ENCODE measurements at regions of chr12 and their contacts with region 1.

Region 1: GRCh38 chr12:119115296-119115905 is 63.3 kb upstream of the HSPB8 start:
- DNase-seq: no peak
- ATAC-seq: peak; percentile 44

Region 2: GRCh38 chr12:119008691-119009221 is 106.6 kb before region 1 on chr12:
- intact Hi-C with region 1: no loop called
- DNase-seq: no peak
- ATAC-seq: no peak

Region 3: DNA sequence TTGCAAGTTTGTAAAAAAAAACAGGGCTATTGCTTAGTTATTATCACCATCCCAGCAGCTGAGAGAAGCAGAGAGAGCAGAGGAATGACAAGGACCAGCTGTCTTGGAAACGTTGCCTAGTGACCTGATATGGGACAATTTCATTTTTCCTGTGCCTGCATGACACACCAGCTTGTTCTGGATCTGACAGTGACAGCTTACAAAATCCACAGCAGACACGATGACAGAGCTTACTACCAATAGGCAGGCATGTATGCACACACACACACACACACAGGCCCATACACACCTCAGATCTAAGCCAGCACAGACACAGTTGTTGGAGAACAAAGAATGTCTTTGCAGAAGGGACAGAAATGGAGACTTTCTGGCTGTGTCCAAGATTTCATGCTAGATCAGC is 88.7 kb after region 1 on chr12:
- intact Hi-C with region 1: no loop called
- DNase-seq: no peak
- ATAC-seq: peak; percentile 76

Region 4: GRCh38 chr12:119412811-119413794 is 297.7 kb after region 1 on chr12:
- intact Hi-C with region 1: loop called (anchors 2 kb)
- DNase-seq: peak; percentile 63
- ATAC-seq: peak; percentile 79